Left cardiac atrium (tissue), 4 donors: ENCODE measurements at regions of chr16 and their contacts with region 1.

Region 1: DNA sequence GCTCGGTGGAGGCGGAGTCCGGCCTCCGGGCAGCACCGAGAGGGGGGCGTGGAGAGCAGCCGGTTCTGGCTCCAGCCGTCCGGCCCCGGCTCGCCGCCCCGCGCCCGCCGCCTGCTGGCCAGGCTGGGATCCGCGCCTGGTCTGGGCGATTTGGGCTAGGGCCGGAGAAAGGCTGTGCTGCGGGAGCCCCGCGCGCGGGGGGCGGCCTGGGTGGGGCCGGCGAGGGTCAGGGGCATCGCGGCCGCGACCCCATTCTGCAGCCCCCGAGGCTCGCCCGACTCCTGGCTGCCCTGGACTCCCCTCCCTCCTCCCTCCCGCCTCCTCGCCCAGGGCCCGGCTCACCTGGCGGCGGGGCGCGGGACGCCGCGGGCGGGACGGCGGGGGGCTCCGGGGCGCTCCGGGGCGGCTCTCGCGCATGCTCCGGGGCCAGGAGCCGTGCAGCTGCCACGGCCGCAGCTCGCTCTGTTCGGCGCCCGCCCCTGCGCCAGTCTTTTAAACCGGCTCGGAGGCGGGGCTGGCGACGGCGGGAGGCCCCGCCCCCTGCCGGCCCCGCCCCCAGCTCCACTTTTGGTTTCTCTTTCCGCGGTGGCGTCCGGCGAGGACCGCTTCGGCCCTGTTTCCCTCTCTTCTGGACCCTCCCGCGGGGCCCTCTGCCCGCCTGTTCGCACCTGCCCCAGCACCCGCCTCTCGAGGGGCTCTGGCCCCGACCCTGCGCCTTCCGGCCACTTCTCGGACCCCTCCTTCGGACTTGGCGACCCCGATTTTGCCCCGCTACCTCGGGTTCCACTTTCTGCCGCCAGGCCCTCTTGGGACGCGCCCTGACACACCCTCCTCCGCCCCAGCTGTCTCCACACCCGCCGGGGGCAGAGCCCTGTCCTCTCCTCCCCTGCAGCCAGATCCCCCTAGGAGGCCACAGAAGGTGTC is at the start of gene SOCS1:
- DNase-seq: peak; percentile 87
- ATAC-seq: peak; percentile 83 to 84
- total RNA-seq, gene SOCS1: 5.8 to 8.8 TPM

Region 2: GRCh38 chr16:10971560-10971961 is 284.4 kb before region 1 on chr16:
- intact Hi-C with region 1: loop called (anchors 2 to 5 kb)
- DNase-seq: no peak
- ATAC-seq: peak; percentile 63 to 84

Region 3: DNA sequence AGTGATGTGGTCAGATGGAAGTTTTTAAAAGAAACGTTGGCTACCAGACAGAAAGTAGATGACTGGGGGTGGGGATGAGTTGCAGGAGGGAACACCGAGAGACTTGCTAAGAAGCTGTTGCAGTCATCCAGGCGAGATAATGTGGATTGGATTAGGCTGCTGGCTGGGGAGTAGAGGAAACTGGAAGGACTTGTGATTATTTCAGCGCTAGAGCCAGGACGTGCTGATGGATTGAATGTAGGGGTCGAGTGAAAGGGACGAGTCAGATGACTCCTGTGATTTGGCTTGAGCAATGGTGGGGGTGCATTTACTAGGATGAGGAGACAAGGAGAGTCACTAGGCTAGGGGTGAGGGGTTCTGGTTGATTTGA is 223.1 kb before region 1 on chr16:
- intact Hi-C with region 1: no loop called
- DNase-seq: peak; percentile 41
- ATAC-seq: peak; percentile 73 to 86

Region 4: DNA sequence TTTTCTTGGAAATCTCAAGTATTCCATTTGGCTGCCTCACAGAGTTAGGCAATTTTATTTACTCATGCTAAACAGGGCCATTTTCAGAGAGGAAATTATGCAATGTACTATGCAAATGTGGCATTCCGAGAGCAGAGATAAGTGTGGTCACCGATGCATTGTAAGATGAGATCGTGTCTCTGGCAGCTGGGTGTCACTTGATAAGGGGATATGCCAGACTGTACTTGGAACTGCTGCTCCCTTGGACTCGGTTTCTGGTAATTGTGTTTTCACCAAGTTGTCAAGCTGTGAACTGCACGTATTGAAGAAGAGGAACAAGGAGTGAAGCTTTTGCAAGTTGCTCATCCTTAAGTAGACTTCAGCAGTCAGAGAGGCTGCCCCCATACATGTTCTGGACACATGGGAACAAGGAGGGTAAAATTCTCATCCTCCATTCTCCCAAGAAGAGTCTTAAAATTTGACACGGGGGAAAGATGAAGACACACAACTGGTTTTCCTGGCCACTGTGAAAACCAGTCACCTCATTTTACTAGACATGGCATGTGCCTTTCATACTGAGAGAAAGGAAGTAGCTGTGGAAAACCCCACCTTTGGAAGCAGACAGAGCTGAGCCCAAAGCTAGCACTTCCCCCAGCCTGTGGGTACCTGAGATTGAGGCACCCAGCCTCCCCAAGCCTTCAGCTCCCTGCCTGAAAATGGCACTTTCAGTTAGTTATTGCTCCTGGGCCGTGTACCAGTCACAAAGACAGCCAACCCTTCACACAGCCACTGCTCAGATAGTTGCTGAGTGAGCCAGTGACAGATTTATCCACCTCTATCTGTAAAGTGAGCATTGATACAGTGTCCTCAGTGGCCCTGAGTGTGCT is 150.7 kb before region 1 on chr16:
- intact Hi-C with region 1: loop called in 1 of 2 experiments (anchors 2 kb)
- DNase-seq: peak; percentile 56
- ATAC-seq: peak; percentile 62 to 69

Region 5: GRCh38 chr16:11133344-11133943 is 122.6 kb before region 1 on chr16:
- intact Hi-C with region 1: loop called in 1 of 2 experiments (anchors 10 kb)
- DNase-seq: peak; percentile 85
- ATAC-seq: peak; percentile 66 to 81

Region 6: DNA sequence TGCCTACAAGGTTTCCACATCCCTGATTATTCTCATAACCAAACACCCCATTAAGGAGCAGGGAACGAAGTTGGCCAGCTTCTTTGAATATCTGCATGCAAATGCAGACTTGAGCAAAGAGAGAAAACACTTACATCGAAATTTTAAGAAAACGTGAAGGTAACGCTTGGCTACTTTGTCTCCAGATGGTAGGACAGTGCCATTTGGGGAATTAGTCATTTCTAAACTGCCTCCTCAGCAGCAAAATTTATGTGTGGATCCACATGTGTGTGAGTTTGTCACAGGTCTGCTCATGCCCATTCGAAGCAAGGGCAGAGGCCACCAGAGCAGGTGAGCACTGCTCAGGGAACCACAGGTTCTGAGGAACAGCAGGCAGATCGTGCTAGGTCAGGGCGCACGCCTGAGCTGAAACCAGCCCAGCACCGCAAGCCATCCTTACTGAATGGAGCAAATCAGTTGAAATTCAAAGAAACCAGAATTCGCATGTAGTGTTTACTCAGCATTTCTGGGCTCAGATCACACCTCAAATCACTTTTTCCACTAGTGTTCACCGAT is 80.1 kb before region 1 on chr16:
- intact Hi-C with region 1: loop called in 1 of 2 experiments (anchors 10 kb)
- DNase-seq: no peak
- ATAC-seq: no peak

Region 7: GRCh38 chr16:11312718-11313492 is 56.9 kb after region 1 on chr16:
- intact Hi-C with region 1: no loop called
- DNase-seq: no peak
- ATAC-seq: peak in 1 of 2 donors; percentile 67

Region 8: DNA sequence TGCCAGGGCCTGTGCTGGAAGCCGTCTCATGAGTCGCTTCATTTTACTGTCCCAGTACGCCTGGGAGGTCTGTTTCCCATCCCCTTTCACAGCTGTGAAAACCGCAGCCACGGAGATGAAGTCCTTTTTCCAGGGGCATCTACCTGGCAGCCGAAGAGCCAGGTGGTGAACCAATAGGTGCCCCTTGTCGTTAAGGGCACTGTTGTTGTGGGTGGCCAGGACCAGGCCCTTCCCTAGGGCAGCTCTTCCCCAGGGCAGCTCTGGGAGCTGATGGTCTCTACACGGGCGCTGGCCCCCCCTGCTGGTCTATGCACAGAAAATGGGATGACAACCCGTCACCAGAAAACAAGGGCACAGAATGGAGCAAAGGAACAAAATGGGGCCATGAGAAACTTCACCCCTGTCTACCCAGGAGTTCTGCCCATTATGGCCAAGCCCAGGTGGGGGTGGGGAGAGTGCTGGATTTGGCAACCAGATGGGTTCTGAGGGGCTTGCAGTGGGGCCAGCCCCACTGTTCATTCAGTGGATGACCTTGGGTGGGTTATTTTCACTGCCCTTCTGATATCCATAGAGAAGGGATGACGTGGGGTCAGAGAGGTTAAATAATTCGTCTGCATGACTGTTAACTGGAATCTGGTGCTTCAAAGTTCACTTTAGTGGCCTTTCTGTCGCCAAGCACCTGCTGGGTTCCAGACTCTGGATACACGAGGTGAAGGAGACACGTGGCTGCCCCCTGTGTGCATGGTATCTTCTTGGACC is 100.8 kb after region 1 on chr16:
- intact Hi-C with region 1: loop called in 1 of 2 experiments (anchors 10 kb)
- DNase-seq: peak; percentile 74
- ATAC-seq: peak; percentile 51 to 64

Region 9: DNA sequence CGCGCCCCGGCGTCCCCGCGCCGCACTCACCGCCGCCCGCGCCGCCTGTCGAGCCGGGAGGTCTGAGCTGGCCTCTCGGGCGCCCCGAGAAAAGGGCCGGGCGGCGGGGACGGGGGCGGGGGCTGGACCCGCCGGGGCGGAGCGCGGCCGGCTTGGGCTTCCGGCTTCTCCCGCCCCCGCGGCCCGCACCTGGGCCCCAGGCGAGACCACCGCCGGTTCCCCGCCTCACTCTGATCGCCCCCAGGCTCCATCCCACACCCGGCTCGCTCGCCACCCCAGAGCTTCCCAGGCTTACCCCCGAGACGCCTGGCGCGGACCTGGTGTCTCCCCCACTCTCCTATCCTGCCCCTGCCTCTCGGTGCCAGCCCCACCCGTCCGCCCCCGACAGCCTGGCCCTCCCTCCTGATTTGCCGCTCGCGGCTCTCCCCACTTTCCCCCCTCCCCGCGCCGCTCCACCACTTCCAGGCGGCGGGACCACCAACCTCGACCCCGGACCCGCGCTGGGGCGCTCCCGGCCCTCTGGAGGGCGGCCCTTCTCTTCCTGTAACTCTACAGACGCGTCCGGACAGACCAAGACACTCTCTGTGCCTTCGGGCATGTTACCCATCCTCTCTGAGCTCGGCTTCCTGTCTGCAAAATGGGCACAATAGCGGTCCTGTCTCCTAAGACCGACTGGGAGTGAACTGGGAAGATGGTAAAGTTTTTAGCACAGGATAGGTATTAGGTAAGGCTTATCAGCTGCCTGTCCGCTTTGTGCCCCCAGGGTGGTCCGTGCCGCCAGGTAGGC is 331.1 kb after region 1 on chr16 and contains the start of gene LITAF:
- intact Hi-C with region 1: no loop called
- DNase-seq: peak; percentile 74
- ATAC-seq: peak; percentile 88 to 90
- total RNA-seq, gene LITAF: 76.3 to 86.0 TPM